GM10248 (cell line): ENCODE measurements at regions of chr2 and their contacts with region 1.

Region 1: DNA sequence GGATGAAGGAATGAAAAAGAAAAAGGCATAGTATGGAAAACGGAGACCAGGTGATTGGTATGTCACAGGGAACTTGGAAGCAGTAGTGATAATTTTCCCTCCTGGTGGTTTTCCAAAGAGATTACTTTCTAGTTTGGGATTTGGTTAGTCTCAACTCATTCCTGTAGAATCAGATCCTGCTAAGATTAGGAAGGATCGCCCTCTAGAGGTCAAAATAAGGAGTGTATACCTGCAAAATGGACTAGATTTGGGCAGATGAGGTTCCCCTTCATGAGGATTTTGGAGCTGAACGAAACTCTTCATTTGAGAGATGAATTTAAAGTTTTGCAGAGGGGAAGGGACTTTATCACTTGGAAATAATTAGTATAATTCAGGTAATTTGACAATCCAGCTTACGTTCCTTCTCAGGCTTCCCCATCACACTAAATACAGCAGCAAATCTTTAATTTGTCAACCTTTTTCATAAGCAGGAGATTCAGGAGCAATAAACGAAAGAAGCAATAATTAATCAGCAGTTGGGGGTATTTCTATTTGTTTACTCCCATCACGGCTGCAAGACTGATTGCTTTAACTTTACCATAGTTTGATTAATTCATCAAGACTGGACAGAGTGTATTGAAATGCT is 65.2 kb downstream of the CCDC195 start:
- DNase-seq: peak; percentile 55
- CTCF ChIP-seq: peak; percentile 77

Region 2: GRCh38 chr2:224357098-224357901 is 293.6 kb before region 1 on chr2:
- CTCF ChIA-PET with region 1: interaction called, 24 read pairs
- POLR2A ChIA-PET with region 1: no interaction called
- DNase-seq: peak; percentile 74
- CTCF ChIP-seq: peak; percentile 68

Region 3: GRCh38 chr2:224369028-224369632 is 281.8 kb before region 1 on chr2:
- CTCF ChIA-PET with region 1: interaction called, 18 read pairs
- POLR2A ChIA-PET with region 1: no interaction called
- DNase-seq: peak; percentile 37
- CTCF ChIP-seq: peak; percentile 56

Region 4: GRCh38 chr2:224570328-224570993 is 80.5 kb before region 1 on chr2:
- CTCF ChIA-PET with region 1: no interaction called
- POLR2A ChIA-PET with region 1: no interaction called
- DNase-seq: no peak
- CTCF ChIP-seq: no peak

Region 5: DNA sequence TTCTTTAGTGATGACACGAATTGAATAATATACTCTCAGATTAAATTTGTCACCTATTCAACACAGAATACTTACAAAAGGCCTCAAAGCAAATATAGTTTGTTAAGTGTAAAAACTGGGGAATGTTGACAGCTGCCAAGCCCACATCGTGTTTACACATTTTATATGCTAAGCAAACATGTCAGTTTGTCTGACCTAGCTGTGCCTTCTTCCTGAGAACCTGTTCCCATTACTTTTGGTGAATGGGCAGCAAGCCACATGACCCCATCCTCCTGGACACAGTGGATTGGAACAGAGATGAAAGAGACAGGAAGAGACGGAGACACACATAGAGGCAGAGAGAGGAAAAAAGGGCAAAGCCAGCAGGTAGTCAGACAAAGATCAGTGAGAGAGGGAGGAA is 42.8 kb before region 1 on chr2:
- CTCF ChIA-PET with region 1: interaction called, 14 read pairs
- POLR2A ChIA-PET with region 1: no interaction called
- DNase-seq: no peak
- CTCF ChIP-seq: no peak

Region 6: GRCh38 chr2:224638301-224638823 is 12.6 kb before region 1 on chr2:
- CTCF ChIA-PET with region 1: interaction called, 17 read pairs
- POLR2A ChIA-PET with region 1: no interaction called
- DNase-seq: peak; percentile 76
- CTCF ChIP-seq: no peak